ENCODE measurements at regions of chrX and their contacts with region 1.

Region 1: DNA sequence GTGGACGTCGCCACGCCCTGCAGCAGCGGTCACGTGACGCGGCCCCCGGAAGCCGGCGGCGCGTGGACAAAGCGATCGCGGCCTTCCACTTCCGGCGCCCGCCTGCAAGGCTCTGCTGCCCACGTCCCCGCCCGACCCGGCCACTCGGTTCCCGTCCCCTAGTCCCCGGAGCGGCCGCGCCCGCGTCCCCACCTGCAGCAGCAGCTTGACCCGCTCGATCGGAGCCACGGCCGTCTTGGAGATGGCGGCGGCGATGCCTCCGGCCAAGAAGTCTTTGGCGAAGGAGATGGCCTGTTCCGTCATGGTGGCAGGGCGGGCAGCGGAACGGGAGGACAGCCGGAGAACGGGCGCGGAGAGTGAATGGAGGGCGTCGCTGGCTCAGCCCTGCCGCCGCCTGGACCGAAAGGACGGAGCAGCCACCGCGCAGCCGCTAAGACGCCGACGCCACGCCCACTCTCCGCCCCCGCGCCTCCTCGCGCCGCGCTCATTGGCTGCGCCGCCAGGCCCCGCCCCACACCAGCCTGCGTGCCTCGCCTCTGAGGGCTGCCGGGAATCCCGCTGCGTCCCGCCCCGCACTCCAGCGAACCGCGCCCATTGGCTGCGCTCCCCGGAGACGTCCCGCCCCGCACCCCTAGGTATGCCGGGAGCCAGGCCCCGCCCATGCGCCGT is at the start of gene SLC25A6:
- DNase-seq: peak; percentile 99
- ATAC-seq: peak; percentile 93
- total RNA-seq, gene SLC25A6: 141 TPM

Region 2: DNA sequence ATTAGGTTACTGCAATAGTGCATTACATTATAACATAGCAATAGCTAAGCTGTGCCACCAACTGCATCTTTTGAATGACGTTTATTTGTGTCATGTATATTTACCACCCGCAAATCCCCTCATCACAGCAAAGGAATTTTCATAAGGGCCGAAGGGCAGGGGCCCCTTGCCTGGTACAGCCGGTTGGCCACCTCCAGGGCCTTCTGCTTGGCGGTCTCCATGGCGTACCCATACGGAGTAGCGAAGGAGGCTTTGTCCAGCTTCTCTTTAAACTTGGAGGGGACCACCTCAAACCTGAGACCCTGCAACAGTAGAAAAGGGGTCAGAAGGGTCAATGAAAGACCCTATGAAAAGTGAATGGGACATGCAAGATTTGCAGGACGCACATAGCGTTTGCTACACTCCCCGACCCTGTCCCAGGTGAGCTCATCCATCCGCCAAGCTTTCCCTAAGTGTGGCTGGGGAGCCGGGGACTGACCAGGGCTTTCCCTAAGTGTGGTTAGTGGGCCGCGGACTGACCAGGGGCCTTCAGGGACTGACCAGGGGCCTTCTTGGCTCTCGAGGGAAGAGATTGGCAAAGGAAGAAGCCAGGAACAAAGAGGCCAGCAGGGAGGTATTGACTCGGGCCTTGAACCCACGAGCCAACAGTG is 50.3 kb after region 1 on chrX:
- intact Hi-C with region 1: loop called (anchors 10 kb)
- DNase-seq: no peak
- ATAC-seq: no peak

Region 3: GRCh38 chrX:1534301-1535168 is 142.7 kb after region 1 on chrX:
- intact Hi-C with region 1: no loop called
- DNase-seq: no peak
- ATAC-seq: no peak